ENCODE measurements at regions of chr10 and their contacts with region 1.

Region 1: GRCh38 chr10:100986952-100987750 is at the starts of genes MRPL43 and TWNK:
- DNase-seq: peak; percentile 68 to 90 (median 87)
- ATAC-seq: peak; percentile 95
- H3K4me3 ChIP-seq: peak within 1 kb of the TSS; percentile 79 to 93
- H3K4me3 Mint-ChIP-seq: peak within 1 kb of the TSS; percentile 99
- H3K27ac ChIP-seq: peak within 1 kb of the TSS; percentile 51 to 64
- H3K27ac Mint-ChIP-seq: peak within 1 kb of the TSS; percentile 95
- H3K4me1 ChIP-seq: peaks cover 35% of the 10 kb centered on the region
- H3K4me1 Mint-ChIP-seq: peaks cover 46% of the 10 kb centered on the region
- H3K27me3 ChIP-seq: no peaks in the 10 kb centered on the region
- H3K27me3 Mint-ChIP-seq: no peaks in the 10 kb centered on the region
- CTCF ChIP-seq: no peak
- total RNA-seq, gene MRPL43: 28.3 to 28.4 TPM
- total RNA-seq, gene TWNK: 4.6 to 4.7 TPM

Region 2: GRCh38 chr10:100535715-100536353 is 451.3 kb before region 1 on chr10 and contains the start of gene HIF1AN:
- CTCF ChIA-PET with region 1: no interaction called
- POLR2A ChIA-PET with region 1: no interaction called
- intact Hi-C with region 1: loop called in 1 of 2 experiments (anchors 5 kb)
- DNase-seq: peak; percentile 73 to 97 (median 88)
- ATAC-seq: peak; percentile 99
- H3K4me3 ChIP-seq: peak within 1 kb of the TSS; percentile 59 to 82
- H3K4me3 Mint-ChIP-seq: no peak within 1 kb of the TSS
- H3K27ac ChIP-seq: peak within 1 kb of the TSS; percentile 55 to 75
- H3K27ac Mint-ChIP-seq: no peak within 1 kb of the TSS
- H3K4me1 ChIP-seq: peaks cover 29% of the 10 kb centered on the region
- H3K4me1 Mint-ChIP-seq: peaks cover 19% of the 10 kb centered on the region
- H3K27me3 ChIP-seq: no peaks in the 10 kb centered on the region
- H3K27me3 Mint-ChIP-seq: no peaks in the 10 kb centered on the region
- CTCF ChIP-seq: peak; percentile 92
- total RNA-seq, gene HIF1AN: 28.0 to 31.2 TPM

Region 3: DNA sequence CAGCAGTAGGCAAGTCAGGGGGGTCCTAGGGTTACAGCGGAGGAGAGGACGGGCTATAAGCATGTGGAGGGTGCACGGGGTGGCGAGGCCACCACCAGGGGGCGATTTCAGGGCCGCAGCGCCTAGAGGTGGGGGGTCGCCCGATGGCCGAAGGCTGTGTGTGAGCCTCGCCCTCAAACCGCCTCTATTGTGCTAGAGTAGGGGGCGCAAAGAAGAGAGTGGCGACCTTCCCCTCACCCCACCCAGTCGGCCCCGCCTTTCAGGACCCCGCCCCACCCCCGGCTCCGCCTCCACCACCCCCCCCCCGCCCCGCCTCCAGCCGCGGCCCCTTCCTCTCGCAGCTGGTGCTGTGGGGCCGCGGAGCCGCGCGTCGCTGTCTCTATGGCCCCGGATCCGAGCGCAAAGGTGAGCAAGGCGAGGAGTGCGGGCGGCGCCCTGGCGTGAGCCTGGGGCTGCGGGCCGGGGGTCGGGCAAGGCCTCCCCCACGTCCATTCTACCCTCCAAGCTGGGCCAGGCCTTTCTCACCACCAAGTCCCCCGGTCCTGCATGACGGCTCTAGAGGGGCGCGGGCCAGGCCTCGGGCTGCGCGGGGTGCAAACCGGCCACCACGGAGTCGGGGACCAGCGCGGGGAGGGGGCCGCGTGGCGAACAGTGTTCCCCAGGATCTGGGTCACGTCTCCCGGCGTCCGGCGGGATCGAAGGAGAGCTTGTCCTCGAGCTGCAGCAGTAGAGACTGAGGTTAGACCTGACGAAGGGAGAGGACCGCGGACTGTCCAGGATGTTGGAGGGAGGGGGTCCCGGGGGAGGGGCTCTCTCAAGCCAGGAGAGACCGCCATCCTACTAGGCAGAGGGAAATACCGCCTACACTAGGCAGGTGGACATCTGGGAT is 17.7 kb before region 1 on chr10 and contains the start of gene SEMA4G:
- CTCF ChIA-PET with region 1: interaction called, 3 read pairs
- POLR2A ChIA-PET with region 1: no interaction called
- intact Hi-C with region 1: loop called in 1 of 2 experiments (anchors 2 kb)
- DNase-seq: peak in 8 of 9 experiments; percentile 19 to 71 (median 52)
- ATAC-seq: peak; percentile 68
- H3K4me3 ChIP-seq: peak within 1 kb of the TSS; percentile 29 to 56
- H3K4me3 Mint-ChIP-seq: peak within 1 kb of the TSS; percentile 74
- H3K27ac ChIP-seq: no peak within 1 kb of the TSS
- H3K27ac Mint-ChIP-seq: no peak within 1 kb of the TSS
- H3K4me1 ChIP-seq: peaks cover 13% of the 10 kb centered on the region
- H3K4me1 Mint-ChIP-seq: peaks cover 15% of the 10 kb centered on the region
- H3K27me3 ChIP-seq: no peaks in the 10 kb centered on the region
- H3K27me3 Mint-ChIP-seq: no peaks in the 10 kb centered on the region
- CTCF ChIP-seq: peak; percentile 58
- total RNA-seq, gene SEMA4G: 0.35 to 0.61 TPM

Region 4: DNA sequence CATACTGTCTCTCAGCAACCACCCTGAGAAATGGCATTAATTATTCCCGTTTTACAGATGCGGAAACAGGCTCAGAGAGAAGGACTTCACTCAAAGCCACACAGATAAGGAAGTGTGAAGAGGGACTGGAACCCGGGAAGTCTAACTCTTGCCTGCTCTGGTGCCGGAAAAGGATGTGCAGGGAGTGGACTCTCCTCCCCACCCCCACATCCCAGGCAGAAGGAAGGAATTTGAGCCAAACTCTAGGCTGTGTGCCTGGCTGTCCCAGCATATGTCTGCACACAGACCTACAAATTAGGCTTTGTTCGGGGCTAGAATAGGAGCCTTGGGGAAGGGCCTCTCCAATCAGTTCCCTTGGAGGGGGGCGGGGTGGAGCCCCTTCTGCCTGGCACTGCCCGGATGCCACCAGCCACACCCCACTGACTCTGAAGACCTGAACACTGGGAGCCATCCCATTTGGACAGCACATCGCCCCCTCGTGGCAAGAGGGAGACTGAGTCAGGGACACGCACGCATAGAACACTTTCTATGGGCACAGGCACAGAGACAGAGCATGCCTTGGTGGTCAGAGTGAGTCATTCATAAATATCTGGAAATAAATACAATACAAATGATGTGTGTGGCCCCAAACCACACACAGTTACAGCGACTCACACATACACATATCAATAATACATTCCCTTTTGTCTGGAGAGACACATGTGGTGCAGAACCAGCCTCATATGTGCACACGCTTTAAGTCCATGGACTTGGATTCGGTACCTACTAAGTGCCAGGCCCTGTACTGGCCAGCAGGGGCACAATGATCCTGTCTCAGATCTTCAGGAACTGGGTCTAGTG is 25.6 kb after region 1 on chr10:
- CTCF ChIA-PET with region 1: interaction called, 222 read pairs
- POLR2A ChIA-PET with region 1: no interaction called
- intact Hi-C with region 1: no loop called
- DNase-seq: peak; percentile 41 to 85 (median 78)
- ATAC-seq: peak; percentile 86
- H3K4me3 ChIP-seq: no peak overlapping the region
- H3K4me3 Mint-ChIP-seq: no peak overlapping the region
- H3K27ac ChIP-seq: no peak overlapping the region
- H3K27ac Mint-ChIP-seq: no peak overlapping the region
- H3K4me1 ChIP-seq: peaks cover 6% of the 10 kb centered on the region
- H3K4me1 Mint-ChIP-seq: peaks cover 13% of the 10 kb centered on the region
- H3K27me3 ChIP-seq: peaks cover 13 to 16% of the 10 kb centered on the region in 2 experiments
- H3K27me3 Mint-ChIP-seq: peaks cover 33% of the 10 kb centered on the region
- CTCF ChIP-seq: peak; percentile 83

Region 5: DNA sequence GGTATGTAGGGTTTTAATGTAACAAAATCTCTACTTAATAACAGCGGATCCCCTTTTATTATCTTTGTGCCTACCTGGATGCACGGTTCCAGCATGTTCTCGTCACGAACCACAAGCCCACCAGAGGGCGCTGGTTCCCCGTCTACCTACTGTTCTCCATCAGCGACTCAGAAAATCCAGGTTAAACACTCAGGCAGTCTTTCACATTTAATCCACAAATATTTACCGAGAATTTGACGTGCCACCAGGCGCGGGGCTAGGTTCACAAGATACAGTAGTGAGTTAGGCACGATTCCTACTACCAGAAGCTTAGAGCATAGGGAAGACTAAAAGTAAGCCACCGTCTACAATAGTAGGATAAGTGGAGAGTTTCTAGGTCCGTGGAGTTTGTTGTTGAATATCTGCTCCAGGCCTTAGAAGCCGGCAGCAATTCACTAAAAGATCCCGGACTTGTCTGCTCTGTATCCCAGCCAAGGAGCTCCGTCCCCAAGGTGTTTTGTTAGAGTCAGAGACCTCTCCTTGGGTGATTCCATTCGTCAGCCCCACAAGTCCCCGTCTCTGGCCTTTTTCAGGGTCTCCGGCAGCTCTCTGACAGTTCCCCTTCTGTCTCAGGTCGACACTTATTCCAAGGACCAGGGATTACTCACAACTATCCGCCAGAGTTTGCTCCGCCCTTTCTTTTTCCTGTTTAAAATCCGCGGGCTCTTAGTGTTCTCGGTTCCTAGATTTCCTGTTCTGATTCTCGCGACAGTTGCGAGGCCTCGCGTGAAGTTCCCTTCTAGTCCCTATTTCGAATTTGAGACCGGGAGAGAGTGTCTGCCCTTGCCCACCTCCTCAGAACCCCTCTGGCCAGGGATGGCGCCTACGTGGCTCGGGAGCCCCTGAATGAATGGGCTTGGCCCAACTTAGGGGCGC is 73.1 kb after region 1 on chr10:
- CTCF ChIA-PET with region 1: interaction called, 3 read pairs
- POLR2A ChIA-PET with region 1: no interaction called
- intact Hi-C with region 1: loop called in 1 of 2 experiments (anchors 2 kb)
- DNase-seq: peak; percentile 80 to 96 (median 91)
- ATAC-seq: peak; percentile 67
- H3K4me3 ChIP-seq: peak overlapping the region; percentile 85 to 94
- H3K4me3 Mint-ChIP-seq: peak overlapping the region; percentile 98
- H3K27ac ChIP-seq: peak overlapping the region; percentile 55 to 92
- H3K27ac Mint-ChIP-seq: peak overlapping the region; percentile 91
- H3K4me1 ChIP-seq: peaks cover 27% of the 10 kb centered on the region
- H3K4me1 Mint-ChIP-seq: peaks cover 27% of the 10 kb centered on the region
- H3K27me3 ChIP-seq: peaks cover 20 to 27% of the 10 kb centered on the region in 2 experiments
- H3K27me3 Mint-ChIP-seq: peaks cover 18% of the 10 kb centered on the region
- CTCF ChIP-seq: peak; percentile 95

Region 6: GRCh38 chr10:102435529-102436233 is 1448.5 kb after region 1 on chr10:
- CTCF ChIA-PET with region 1: no interaction called
- POLR2A ChIA-PET with region 1: no interaction called
- intact Hi-C with region 1: no loop called
- DNase-seq: peak in 2 of 9 experiments; percentile 32 to 47
- ATAC-seq: no peak
- H3K4me3 ChIP-seq: peak overlapping the region; percentile 48
- H3K4me3 Mint-ChIP-seq: peak overlapping the region; percentile 78
- H3K27ac ChIP-seq: peak overlapping the region; percentile 33 to 59
- H3K27ac Mint-ChIP-seq: peak overlapping the region; percentile 85
- H3K4me1 ChIP-seq: peaks cover 58% of the 10 kb centered on the region
- H3K4me1 Mint-ChIP-seq: peaks cover 54% of the 10 kb centered on the region
- H3K27me3 ChIP-seq: no peaks in the 10 kb centered on the region
- H3K27me3 Mint-ChIP-seq: no peaks in the 10 kb centered on the region
- CTCF ChIP-seq: no peak